ENCODE measurements at regions of chr5 and their contacts with region 1.

Region 1: GRCh38 chr5:77882670-77883257 is 106.6 kb upstream of the TBCA start:
- DNase-seq: no peak

Region 2: DNA sequence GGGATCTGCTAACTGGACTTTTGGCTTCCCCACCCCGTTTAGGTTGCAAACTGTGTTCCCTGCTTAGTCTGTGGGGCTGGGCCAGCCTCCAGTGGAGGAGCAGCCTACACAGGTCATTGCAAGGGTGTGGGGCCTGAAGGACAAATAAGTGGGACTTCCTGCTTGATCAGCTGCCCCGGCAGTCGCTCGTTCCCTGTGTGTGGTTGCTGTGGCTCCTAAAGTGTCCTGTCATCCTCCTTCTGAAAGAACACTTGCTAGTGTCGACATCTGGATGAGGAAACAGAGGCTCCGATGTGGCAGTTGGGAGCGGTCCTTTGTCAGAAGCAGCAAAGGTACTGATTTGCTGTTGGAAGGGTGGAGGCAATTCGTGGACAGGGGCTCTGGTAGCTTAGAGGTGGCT is 17.8 kb before region 1 on chr5:
- intact Hi-C with region 1: loop called in 1 of 2 experiments (anchors 1 kb)
- DNase-seq: no peak

Region 3: DNA sequence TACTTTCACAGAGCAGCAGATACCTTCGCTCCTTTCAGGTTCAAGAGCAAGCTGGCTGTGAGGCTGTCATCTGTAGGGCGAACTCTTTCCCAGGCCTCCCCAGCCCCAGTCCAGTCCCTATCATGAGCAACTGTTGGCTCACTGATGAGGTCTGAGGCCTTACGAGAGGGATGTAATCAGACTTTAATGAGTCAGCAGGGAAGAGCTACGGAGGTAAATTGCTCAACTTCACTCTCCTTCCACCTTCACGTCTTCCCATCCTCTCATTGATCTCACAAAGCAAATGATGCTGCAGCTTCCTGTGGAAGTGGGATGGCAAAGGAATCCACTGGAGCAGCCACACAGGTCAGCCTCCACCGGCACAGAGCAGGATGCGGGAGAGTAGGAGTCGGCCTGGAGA is 24.0 kb after region 1 on chr5:
- intact Hi-C with region 1: no loop called
- DNase-seq: no peak